ENCODE measurements at regions of chr22 and their contacts with region 1.

Region 1: GRCh38 chr22:33519071-33519973 is 401.0 kb downstream of the LARGE1 start:
- DNase-seq: peak in 3 of 10 donors; percentile 25 to 45 (median 33)
- H3K4me3 ChIP-seq: peak overlapping the region in 11 of 59 donors; percentile 3 to 41 (median 25)
- H3K27ac ChIP-seq: peak overlapping the region in 15 of 59 donors; percentile 6 to 76 (median 29)
- H3K27me3 ChIP-seq: no peaks in the 10 kb centered on the region
- CTCF ChIP-seq: peak; percentile 54 to 94 (median 75)

Region 2: DNA sequence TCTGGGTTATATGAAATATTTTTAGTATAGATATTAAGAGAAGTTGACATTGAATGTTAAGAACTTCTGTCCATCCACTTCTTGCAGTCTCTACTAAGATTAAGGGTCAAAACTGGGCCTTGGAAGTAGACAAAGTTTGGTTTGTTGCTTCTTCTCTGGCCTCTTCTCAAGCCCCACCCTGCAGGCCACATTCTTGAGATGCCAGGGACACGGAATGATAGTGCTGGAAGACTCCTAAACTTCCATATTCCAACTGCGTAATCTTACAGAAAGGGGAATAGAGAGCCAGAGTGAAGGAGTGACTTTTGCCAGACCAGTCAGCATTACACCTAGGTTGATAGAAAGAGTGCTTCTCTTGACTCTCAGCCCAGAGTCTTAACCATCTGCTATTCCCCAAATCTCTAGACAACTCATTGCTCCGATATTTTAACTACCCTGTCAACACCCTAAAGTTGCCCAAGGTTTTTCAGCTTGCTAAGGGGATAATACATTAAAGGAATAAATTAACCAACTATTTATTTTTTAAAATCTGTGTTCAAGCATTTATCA is 324.7 kb before region 1 on chr22:
- intact Hi-C with region 1: no loop called
- DNase-seq: no peak
- H3K4me3 ChIP-seq: no peak overlapping the region
- H3K27ac ChIP-seq: no peak overlapping the region
- H3K27me3 ChIP-seq: no peaks in the 10 kb centered on the region
- CTCF ChIP-seq: no peak

Region 3: GRCh38 chr22:33354928-33355327 is 164.4 kb before region 1 on chr22:
- intact Hi-C with region 1: no loop called
- DNase-seq: no peak
- H3K4me3 ChIP-seq: no peak overlapping the region
- H3K27ac ChIP-seq: no peak overlapping the region
- H3K27me3 ChIP-seq: no peaks in the 10 kb centered on the region
- CTCF ChIP-seq: no peak

Region 4: GRCh38 chr22:33579448-33580093 is 60.2 kb after region 1 on chr22:
- intact Hi-C with region 1: loop called in 1 of 2 experiments (anchors 2 kb)
- DNase-seq: peak in 7 of 10 donors; percentile 43 to 51 (median 46)
- H3K4me3 ChIP-seq: no peak overlapping the region
- H3K27ac ChIP-seq: no peak overlapping the region
- H3K27me3 ChIP-seq: no peaks in the 10 kb centered on the region
- CTCF ChIP-seq: peak; percentile 74 to 96 (median 90)

Region 5: GRCh38 chr22:34111210-34111824 is 592.0 kb after region 1 on chr22:
- intact Hi-C with region 1: loop called in 1 of 2 experiments (anchors 10 kb)
- DNase-seq: peak in 2 of 10 donors; percentile 3 to 37
- H3K4me3 ChIP-seq: no peak overlapping the region
- H3K27ac ChIP-seq: no peak overlapping the region
- H3K27me3 ChIP-seq: peaks cover 0 to 13% (median 0%) of the 10 kb centered on the region in 45 donors
- CTCF ChIP-seq: peak; percentile 16 to 75 (median 63)

Measured in dorsolateral prefrontal cortex (tissue), 120 donors.